ENCODE measurements at regions of chr2 and their contacts with region 1.

Region 1: GRCh38 chr2:38665854-38666555 is at the start of gene GALM:
- H3K4me3 Mint-ChIP-seq: peak within 1 kb of the TSS; percentile 83
- H3K27ac Mint-ChIP-seq: peak within 1 kb of the TSS; percentile 90
- H3K4me1 Mint-ChIP-seq: peaks cover 53% of the 10 kb centered on the region
- H3K27me3 Mint-ChIP-seq: no peaks in the 10 kb centered on the region

Region 2: DNA sequence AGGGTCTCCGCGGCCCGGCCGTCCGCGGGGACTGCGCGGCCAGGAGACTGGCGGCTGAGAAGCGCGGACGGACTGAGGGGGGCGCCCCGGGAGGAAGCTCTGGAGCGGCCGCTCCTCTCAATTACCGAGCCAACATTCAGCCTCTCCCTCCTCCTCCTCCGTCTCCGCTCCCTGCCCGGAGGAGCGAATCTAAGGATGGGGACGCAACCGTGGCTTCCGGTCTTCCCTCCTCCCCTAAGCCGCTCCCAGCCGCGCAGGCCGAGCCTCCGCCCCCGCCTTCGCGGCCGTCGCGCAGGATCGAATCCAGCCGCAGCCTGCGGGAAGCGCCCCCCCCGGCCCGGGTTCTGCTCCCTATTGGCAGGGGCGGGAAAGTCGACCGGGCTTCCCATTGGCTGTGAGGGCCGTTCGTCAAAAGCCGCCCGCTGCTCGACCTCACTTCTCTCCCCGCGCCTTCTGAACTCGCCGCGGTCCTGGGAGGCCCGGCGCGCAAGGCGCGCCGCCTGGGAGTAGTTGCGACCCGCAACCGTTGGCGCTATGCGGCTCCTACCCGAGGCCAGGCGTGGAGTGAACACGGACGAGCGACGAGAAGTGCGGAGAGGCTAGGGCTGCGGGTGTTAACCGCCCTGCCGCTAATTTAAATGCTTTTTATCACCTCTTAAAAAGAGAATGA is 63.1 kb before region 1 on chr2 and contains the start of gene HNRNPLL:
- intact Hi-C with region 1: loop called (anchors 2 kb)
- H3K4me3 Mint-ChIP-seq: peak within 1 kb of the TSS; percentile 85
- H3K27ac Mint-ChIP-seq: peak within 1 kb of the TSS; percentile 92
- H3K4me1 Mint-ChIP-seq: peaks cover 52% of the 10 kb centered on the region
- H3K27me3 Mint-ChIP-seq: no peaks in the 10 kb centered on the region